AG04449 (cell line): ENCODE measurements at regions of chr1 and their contacts with region 1.

Region 1: GRCh38 chr1:89589515-89589914 is 43.4 kb upstream of the LRRC8C start:
- DNase-seq: peak; percentile 10
- H3K4me3 ChIP-seq: no peak overlapping the region
- CTCF ChIP-seq: no peak

Region 2: GRCh38 chr1:89444791-89445190 is 144.7 kb before region 1 on chr1:
- CTCF ChIA-PET with region 1: no interaction called
- POLR2A ChIA-PET with region 1: no interaction called
- DNase-seq: no peak
- H3K4me3 ChIP-seq: no peak overlapping the region
- CTCF ChIP-seq: no peak

Region 3: DNA sequence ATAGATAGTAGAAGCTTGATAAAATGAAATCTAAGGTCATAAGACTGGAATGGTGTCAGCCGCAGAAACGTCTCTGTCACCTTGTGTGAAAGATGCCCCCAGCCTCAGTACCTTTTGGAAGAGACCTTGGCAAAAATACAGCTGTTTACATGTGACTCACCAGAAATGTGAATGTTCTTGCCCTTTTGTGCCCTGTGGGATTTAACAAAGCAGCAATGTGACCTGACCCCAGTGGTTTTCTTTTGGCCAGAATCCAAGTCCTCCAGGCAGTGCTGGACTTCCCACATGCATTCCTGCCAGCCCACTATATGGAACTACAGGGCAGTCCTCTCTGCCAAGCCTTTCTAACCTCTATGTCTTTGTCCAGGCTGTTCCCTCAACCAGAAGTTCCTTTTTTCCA is 16.2 kb after region 1 on chr1:
- CTCF ChIA-PET with region 1: interaction called, 14 read pairs
- POLR2A ChIA-PET with region 1: no interaction called
- DNase-seq: no peak
- H3K4me3 ChIP-seq: no peak overlapping the region
- CTCF ChIP-seq: no peak